ENCODE measurements at regions of chr3 and their contacts with region 1.

Region 1: DNA sequence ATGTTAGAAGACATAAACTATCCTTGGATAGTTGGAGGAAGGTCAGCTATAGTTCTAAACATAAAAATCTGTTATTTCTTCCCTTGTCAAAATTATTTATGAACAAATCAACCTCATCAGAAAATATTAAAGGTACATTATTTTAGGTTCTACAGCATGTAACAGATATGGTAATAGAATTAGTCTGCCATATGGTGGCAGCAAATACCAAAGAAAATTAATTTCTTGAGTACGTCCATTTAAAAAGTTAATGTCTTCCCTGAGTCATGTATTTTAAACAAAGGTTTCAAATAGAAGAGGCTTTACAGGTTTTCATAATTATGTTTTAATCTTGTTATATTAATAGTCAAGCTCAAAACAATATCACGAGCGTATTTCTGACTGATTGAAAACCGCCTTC is 17.9 kb upstream of the ANKRD28 start:
- DNase-seq: peak; percentile 21 to 78
- ATAC-seq: peak in 1 of 2 experiments; percentile 84; a peak in 4 of 6 replicates
- H3K4me3 ChIP-seq: no peak overlapping the region
- H3K27ac ChIP-seq: no peak overlapping the region; a peak in 1 of 6 replicates
- H3K4me1 ChIP-seq: peaks cover 18% of the 10 kb centered on the region; the same call in 2 of the 3 replicates
- CTCF ChIP-seq: peak; percentile 68
- EP300 ChIP-seq: no peak
- POLR2A ChIP-seq: no peak
- RAD21 ChIP-seq: peak; percentile 82 to 83

Region 2: GRCh38 chr3:15636003-15636709 is 179.5 kb before region 1 on chr3:
- CTCF ChIA-PET with region 1: interaction called, 59 read pairs
- POLR2A ChIA-PET with region 1: no interaction called
- DNase-seq: peak; percentile 58 to 78
- ATAC-seq: peak; percentile 81 to 82
- H3K4me3 ChIP-seq: no peak overlapping the region
- H3K27ac ChIP-seq: peak overlapping the region; percentile 75 to 95
- H3K4me1 ChIP-seq: peaks cover 81% of the 10 kb centered on the region
- CTCF ChIP-seq: no peak
- EP300 ChIP-seq: peak; percentile 10 to 18; a peak in 1 of 5 replicates
- POLR2A ChIP-seq: no peak
- RAD21 ChIP-seq: no peak; a peak in 1 of 5 replicates

Region 3: DNA sequence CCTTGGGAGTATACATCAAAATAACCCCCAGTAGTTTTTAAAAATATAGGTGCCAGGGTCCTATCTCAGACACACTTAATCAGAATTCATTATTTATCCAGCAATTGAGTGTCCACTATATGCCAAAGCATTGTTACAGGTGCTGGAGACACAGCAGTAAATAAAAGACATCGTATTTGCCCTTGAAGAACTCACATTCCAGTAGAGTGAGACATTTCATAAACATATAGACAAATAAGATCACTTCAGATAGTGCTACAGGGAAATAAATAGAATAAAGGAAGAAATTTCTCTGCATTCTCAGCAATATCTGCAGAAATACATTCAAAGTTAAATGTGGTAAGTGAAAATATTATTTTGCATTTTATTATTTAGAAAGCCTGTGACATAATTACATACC is 16.2 kb after region 1 on chr3:
- CTCF ChIA-PET with region 1: no interaction called
- POLR2A ChIA-PET with region 1: no interaction called
- DNase-seq: no peak
- ATAC-seq: no peak; a peak in 1 of 6 replicates
- H3K4me3 ChIP-seq: no peak overlapping the region
- H3K27ac ChIP-seq: no peak overlapping the region
- H3K4me1 ChIP-seq: peaks cover 10% of the 10 kb centered on the region
- CTCF ChIP-seq: no peak
- EP300 ChIP-seq: no peak
- POLR2A ChIP-seq: no peak
- RAD21 ChIP-seq: no peak

Region 4: GRCh38 chr3:16240283-16241023 is 424.8 kb after region 1 on chr3:
- CTCF ChIA-PET with region 1: interaction called, 20 read pairs
- POLR2A ChIA-PET with region 1: no interaction called
- DNase-seq: peak; percentile 38 to 71
- ATAC-seq: peak; percentile 72 to 80
- H3K4me3 ChIP-seq: no peak overlapping the region
- H3K27ac ChIP-seq: peak overlapping the region; percentile 53 to 63; a peak in 5 of 6 replicates
- H3K4me1 ChIP-seq: peaks cover 22% of the 10 kb centered on the region
- CTCF ChIP-seq: no peak
- EP300 ChIP-seq: no peak
- POLR2A ChIP-seq: no peak
- RAD21 ChIP-seq: no peak

Region 5: DNA sequence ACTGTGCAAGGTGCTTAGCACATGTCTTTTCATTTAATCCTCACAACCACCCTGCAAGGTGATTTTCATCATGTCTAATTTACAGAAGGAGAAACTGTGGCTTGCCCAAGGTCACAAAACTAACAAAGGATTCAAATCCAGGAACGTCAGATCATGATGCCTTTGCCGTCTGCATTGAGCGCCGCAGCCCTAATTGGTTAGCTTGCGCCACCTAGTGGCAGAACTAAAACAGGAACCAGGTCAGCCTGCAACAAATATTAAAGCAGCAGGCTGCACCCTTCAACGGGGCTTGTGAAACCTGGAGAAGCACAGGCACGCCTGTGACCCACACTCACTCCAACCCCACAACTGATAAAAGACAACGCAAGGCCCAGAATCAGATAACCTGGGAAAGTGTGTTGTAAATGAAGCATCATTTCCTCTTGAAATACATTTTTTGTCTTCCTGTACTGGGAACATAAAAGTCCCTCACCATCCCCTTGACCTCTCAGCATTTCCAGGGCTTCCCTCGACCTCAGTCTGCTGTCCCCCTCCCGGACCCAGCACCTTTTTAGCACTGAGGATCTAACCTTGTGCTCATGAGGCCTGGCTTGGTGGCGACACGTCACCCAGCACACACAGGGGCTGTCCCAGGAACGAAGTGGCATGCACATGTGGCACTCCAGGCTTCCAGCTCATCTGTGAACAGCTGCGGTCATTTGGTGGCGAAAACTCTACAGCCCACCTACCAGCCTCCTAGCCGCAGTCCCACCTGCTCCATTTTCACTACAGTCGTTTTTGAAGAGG is 431.8 kb after region 1 on chr3:
- CTCF ChIA-PET with region 1: interaction called, 20 read pairs
- POLR2A ChIA-PET with region 1: no interaction called
- DNase-seq: peak; percentile 68 to 81
- ATAC-seq: peak; percentile 85 to 94
- H3K4me3 ChIP-seq: no peak overlapping the region
- H3K27ac ChIP-seq: peak overlapping the region; percentile 46 to 58; a peak in 4 of 6 replicates
- H3K4me1 ChIP-seq: peaks cover 6% of the 10 kb centered on the region
- CTCF ChIP-seq: peak; percentile 93
- EP300 ChIP-seq: no peak
- POLR2A ChIP-seq: no peak
- RAD21 ChIP-seq: peak; percentile 96 to 97

Region 6: DNA sequence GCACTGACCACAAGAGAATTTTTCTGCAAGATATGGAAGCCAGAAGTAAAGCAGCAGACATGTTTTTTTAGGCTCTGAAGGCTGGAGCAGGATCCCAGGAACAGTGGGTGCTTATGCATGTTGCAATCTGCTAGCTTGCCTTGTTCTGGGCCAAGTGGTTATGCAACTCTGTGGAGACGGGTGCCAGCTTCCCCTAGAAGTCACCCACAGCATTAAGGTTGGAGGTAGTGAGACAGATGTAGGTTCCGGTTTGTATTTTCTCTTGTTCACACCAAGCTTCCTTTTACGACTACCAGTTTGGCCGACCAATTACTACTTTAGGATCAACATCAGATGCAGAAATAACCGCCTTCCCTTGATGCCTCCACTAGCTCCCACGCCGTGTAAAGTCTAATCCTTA is 437.9 kb after region 1 on chr3:
- CTCF ChIA-PET with region 1: interaction called, 18 read pairs
- POLR2A ChIA-PET with region 1: no interaction called
- DNase-seq: no peak
- ATAC-seq: no peak
- H3K4me3 ChIP-seq: no peak overlapping the region
- H3K27ac ChIP-seq: no peak overlapping the region
- H3K4me1 ChIP-seq: no peaks in the 10 kb centered on the region
- CTCF ChIP-seq: no peak
- EP300 ChIP-seq: no peak
- POLR2A ChIP-seq: no peak
- RAD21 ChIP-seq: no peak